ENCODE measurements at regions of chr9 and their contacts with region 1.

Region 1: GRCh38 chr9:128771745-128772519 is at the start of gene ZER1:
- DNase-seq: peak; percentile 85 to 97 (median 93)
- ATAC-seq: peak; percentile 94 to 95 (median 95)
- H3K4me3 ChIP-seq: peak within 1 kb of the TSS; percentile 65 to 73
- H3K4me3 Mint-ChIP-seq: peak within 1 kb of the TSS; percentile 96 to 98 (median 97)
- H3K27ac ChIP-seq: peak within 1 kb of the TSS; percentile 89
- H3K27ac Mint-ChIP-seq: peak within 1 kb of the TSS; percentile 96 to 97
- H3K4me1 ChIP-seq: peaks cover 0 to 29% of the 10 kb centered on the region in 2 experiments
- H3K4me1 Mint-ChIP-seq: peaks cover 35 to 39% (median 38%) of the 10 kb centered on the region in 3 donors
- H3K27me3 ChIP-seq: no peaks in the 10 kb centered on the region
- H3K27me3 Mint-ChIP-seq: no peaks in the 10 kb centered on the region
- total RNA-seq, gene ZER1: 38.4 to 50.6 (median 40.2) TPM

Region 2: GRCh38 chr9:128575469-128575868 is 196.5 kb before region 1 on chr9:
- CTCF ChIA-PET with region 1: no interaction called
- POLR2A ChIA-PET with region 1: no interaction called
- DNase-seq: no peak
- ATAC-seq: no peak
- H3K4me3 ChIP-seq: no peak overlapping the region
- H3K4me3 Mint-ChIP-seq: no peak overlapping the region
- H3K27ac ChIP-seq: no peak overlapping the region
- H3K27ac Mint-ChIP-seq: peak overlapping the region; percentile 34 to 59
- H3K4me1 ChIP-seq: no peaks in the 10 kb centered on the region
- H3K4me1 Mint-ChIP-seq: peaks cover 0 to 20% (median 19%) of the 10 kb centered on the region in 3 donors
- H3K27me3 ChIP-seq: no peaks in the 10 kb centered on the region
- H3K27me3 Mint-ChIP-seq: no peaks in the 10 kb centered on the region

Region 3: GRCh38 chr9:128615544-128615943 is 156.4 kb before region 1 on chr9:
- CTCF ChIA-PET with region 1: no interaction called
- POLR2A ChIA-PET with region 1: interaction called in 1 of 2 experiments, 10 read pairs
- DNase-seq: no peak
- ATAC-seq: no peak
- H3K4me3 ChIP-seq: no peak overlapping the region
- H3K4me3 Mint-ChIP-seq: no peak overlapping the region
- H3K27ac ChIP-seq: no peak overlapping the region
- H3K27ac Mint-ChIP-seq: no peak overlapping the region
- H3K4me1 ChIP-seq: no peaks in the 10 kb centered on the region
- H3K4me1 Mint-ChIP-seq: no peaks in the 10 kb centered on the region
- H3K27me3 ChIP-seq: no peaks in the 10 kb centered on the region
- H3K27me3 Mint-ChIP-seq: no peaks in the 10 kb centered on the region

Region 4: GRCh38 chr9:128688512-128689292 is 83.2 kb before region 1 on chr9 and contains the start of gene SET:
- CTCF ChIA-PET with region 1: no interaction called
- POLR2A ChIA-PET with region 1: interaction called in 1 of 2 experiments, 11 read pairs
- DNase-seq: peak; percentile 81 to 96 (median 89)
- ATAC-seq: peak; percentile 79 to 84 (median 82)
- H3K4me3 ChIP-seq: peak within 1 kb of the TSS; percentile 73 to 84
- H3K4me3 Mint-ChIP-seq: peak within 1 kb of the TSS; percentile 84 to 92 (median 88)
- H3K27ac ChIP-seq: peak within 1 kb of the TSS; percentile 82
- H3K27ac Mint-ChIP-seq: peak within 1 kb of the TSS; percentile 96 to 97
- H3K4me1 ChIP-seq: peaks cover 28 to 60% of the 10 kb centered on the region in 2 experiments
- H3K4me1 Mint-ChIP-seq: peaks cover 64 to 65% (median 65%) of the 10 kb centered on the region in 3 donors
- H3K27me3 ChIP-seq: no peaks in the 10 kb centered on the region
- H3K27me3 Mint-ChIP-seq: no peaks in the 10 kb centered on the region
- total RNA-seq, gene SET: 239 to 279 (median 252) TPM